Head of caudate nucleus (tissue), 42 donors: ENCODE measurements at regions of chrX and their contacts with region 1.

Region 1: DNA sequence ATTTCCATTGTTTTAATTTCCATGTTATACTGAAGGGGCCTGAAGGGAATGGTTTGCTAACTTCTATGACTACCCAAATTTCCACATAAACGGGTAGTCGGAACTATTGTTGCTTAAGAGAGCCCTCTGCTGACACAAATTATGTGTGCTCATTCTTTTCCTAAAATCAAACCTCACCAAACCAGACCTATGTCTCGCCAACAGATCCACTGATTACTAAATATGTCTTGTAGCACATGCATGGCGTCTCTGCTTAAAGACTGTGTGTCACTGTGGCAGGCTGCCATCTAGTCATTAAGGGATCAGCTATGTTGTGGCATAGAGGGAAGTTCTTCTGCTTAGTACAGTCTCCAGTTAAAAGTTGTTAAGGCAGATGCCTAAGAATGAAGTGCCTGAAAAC is 25.1 kb downstream of the PIR start:
- DNase-seq: peak in 4 of 42 donors; percentile 1 to 33 (median 23)

Region 2: DNA sequence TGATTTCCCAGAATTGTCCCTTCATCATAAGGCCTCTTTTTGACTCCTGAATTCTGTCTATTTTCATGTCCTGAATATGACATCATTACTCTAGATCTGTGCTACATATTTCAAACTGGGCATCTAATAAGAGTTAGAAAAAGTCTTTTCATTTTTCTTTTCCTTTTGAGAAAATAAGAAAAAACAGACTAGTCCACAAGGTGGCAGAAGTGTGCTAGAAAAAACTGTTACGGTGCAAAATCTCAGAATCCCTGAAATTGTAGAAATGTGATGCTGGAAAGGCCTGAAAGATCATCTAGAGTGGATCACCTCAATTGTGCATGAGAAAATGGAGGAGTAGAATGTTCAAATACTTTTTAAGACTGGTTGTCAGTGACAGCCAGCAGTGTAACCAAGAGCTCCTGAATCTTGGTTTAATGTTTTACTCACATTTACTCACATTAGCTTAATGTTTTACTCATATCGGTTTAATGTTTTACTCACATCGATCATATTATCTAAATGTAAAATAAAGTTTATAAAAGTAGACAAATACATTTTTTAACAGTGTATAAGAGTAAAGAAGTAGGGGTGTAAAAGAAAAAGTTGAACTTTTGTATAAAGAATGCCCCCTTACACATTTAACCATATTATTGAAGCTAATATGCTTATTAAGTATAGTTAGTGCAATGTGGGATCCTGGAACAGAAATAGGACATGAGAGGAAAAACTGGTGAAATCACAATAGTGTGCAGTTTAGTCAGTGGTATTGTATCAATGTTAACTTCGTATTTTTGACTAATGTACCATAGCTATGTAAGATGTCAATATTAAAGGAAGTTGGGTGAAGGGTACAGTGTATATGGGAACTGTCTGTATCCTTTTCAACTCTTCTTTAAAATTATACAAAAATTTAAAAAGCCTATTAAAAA is 167.8 kb before region 1 on chrX:
- intact Hi-C with region 1: loop called (anchors 10 kb)
- DNase-seq: peak in 3 of 42 donors; percentile 4 to 47 (median 43)

Region 3: GRCh38 chrX:15356444-15356843 is 111.6 kb before region 1 on chrX:
- intact Hi-C with region 1: loop called (anchors 10 kb)
- DNase-seq: no peak

Region 4: DNA sequence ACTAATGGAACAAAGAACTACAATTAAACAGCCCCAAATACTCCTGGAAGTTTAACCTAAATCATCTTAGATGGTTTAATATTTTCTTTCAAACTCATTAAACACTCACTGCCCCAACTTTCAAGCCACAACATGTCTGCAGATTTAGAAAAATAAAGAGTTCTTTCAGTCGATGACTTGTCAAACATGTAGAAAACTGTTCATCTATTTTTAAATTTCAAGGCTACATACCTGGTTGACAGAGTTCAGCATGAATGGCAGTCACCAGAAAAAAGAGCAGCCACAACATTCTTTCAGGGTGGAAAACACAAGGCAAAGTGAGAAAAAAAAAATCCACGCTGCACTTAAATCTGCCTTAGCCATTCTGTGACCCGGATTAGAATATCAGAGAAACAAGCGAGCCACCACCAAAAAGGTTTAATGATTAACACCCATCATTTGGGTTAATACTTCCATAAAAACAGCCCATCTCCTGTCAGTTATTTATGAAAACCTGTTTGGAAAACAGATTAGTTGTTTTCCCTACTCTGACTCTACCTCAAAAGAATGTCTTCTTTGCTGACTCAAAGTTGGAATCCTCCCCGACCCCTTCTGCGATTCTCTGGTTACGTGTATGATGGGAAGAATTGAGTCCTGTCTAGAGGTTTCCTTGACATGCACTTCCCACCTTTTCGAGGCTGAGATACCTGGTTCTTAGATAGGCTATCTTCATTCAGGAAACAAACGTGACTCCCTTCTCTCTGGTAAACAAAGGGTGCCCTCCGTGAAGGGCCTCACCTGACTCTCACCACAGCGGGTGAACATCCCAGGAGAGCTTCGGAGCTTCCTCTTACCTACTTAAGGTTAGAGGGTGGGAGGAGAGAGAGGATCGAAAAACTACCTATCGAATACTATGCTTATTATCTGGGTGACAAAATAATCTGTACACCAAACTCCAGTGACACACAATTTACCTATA is 196.7 kb after region 1 on chrX and contains the start of gene CLTRN:
- intact Hi-C with region 1: no loop called
- DNase-seq: no peak

Region 5: GRCh38 chrX:16357902-16358301 is 889.9 kb after region 1 on chrX:
- intact Hi-C with region 1: no loop called
- DNase-seq: no peak